ENCODE measurements at regions of chr15 and their contacts with region 1.

Region 1: GRCh38 chr15:90691982-90692773 is 25.0 kb upstream of the BLM start:
- DNase-seq: no peak
- H3K4me3 ChIP-seq: no peak overlapping the region
- H3K27ac ChIP-seq: no peak overlapping the region
- H3K4me1 ChIP-seq: no peaks in the 10 kb centered on the region
- H3K27me3 ChIP-seq: no peaks in the 10 kb centered on the region
- CTCF ChIP-seq: no peak

Region 2: GRCh38 chr15:90648137-90649070 is 43.8 kb before region 1 on chr15:
- intact Hi-C with region 1: loop called (anchors 1 kb)
- DNase-seq: peak; percentile 60 to 89
- H3K4me3 ChIP-seq: no peak overlapping the region
- H3K27ac ChIP-seq: peak overlapping the region in 1 of 2 donors; percentile 60
- H3K4me1 ChIP-seq: peaks cover 0 to 15% of the 10 kb centered on the region in 2 donors
- H3K27me3 ChIP-seq: no peaks in the 10 kb centered on the region
- CTCF ChIP-seq: peak; percentile 86 to 96 (median 88)

Region 3: DNA sequence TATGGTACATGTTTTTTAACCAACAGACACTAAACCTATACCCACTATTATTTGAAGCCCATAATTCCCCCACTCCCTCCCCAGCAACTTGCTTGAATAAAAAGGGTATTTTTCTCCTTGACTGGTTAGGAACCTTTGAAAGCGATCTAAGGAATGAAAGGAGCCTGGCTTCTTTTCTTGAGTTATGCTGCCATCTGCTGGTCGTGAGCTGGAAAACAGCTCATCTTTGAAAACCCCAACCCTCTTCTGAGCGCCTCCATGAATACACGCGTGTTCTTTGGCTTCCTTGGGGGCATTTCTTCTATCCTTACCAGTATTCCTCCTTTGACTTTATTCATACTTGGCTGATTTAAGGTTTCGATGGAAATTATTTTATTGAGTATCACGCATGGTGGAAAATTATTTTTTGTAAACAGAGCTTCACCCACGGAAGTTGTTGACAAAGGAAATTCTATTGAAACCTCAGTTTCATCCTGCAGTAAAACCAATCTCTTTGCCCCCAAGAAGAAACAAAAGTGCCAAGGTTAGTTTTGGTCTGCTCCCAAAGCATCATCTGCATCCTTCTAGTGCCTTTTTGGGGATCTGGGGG is 579.5 kb after region 1 on chr15:
- intact Hi-C with region 1: no loop called
- DNase-seq: peak in 1 of 2 donors; percentile 76
- H3K4me3 ChIP-seq: no peak overlapping the region
- H3K27ac ChIP-seq: no peak overlapping the region
- H3K4me1 ChIP-seq: no peaks in the 10 kb centered on the region
- H3K27me3 ChIP-seq: no peaks in the 10 kb centered on the region
- CTCF ChIP-seq: peak; percentile 68 to 82 (median 71)